IMR-90 (cell line): ENCODE measurements at regions of chr16 and their contacts with region 1.

Region 1: DNA sequence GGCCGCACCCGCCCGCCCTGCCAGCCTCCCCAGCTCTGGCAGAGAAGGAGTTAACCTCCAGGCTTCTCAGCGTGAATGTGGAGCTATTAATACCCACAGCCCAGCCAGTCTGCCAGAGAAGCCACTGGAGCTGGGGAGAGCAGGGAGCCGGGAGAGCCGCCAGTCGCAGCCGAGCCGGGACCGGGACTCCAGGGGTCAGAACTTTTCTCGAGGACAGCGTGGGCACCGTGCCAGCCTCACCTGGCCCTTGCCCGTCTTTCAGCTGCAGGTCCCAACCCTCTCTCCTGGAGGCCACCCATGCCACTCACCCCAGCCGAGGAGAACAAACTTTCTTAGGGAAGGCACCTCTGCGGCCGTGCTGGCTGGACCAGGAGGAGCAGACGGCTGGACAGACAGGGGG is 33.8 kb upstream of the SBK1 start:
- DNase-seq: peak; percentile 4
- ATAC-seq: peak; percentile 84
- H3K4me3 ChIP-seq: no peak overlapping the region
- H3K27ac ChIP-seq: no peak overlapping the region
- H3K4me1 ChIP-seq: no peaks in the 10 kb centered on the region
- H3K27me3 ChIP-seq: peaks cover 60% of the 10 kb centered on the region
- CTCF ChIP-seq: no peak
- POLR2A ChIP-seq: no peak
- RAD21 ChIP-seq: no peak

Region 2: GRCh38 chr16:27698266-27698665 is 560.3 kb before region 1 on chr16:
- CTCF ChIA-PET with region 1: no interaction called
- POLR2A ChIA-PET with region 1: no interaction called
- dilution Hi-C with region 1: no loop called
- in situ Hi-C with region 1: no loop called
- intact Hi-C with region 1: no loop called
- DNase-seq: no peak
- ATAC-seq: no peak
- H3K4me3 ChIP-seq: no peak overlapping the region
- H3K27ac ChIP-seq: no peak overlapping the region
- H3K4me1 ChIP-seq: peaks cover 2% of the 10 kb centered on the region; the same call in 1 of the 2 replicates
- H3K27me3 ChIP-seq: no peaks in the 10 kb centered on the region
- CTCF ChIP-seq: no peak
- POLR2A ChIP-seq: no peak
- RAD21 ChIP-seq: no peak

Region 3: DNA sequence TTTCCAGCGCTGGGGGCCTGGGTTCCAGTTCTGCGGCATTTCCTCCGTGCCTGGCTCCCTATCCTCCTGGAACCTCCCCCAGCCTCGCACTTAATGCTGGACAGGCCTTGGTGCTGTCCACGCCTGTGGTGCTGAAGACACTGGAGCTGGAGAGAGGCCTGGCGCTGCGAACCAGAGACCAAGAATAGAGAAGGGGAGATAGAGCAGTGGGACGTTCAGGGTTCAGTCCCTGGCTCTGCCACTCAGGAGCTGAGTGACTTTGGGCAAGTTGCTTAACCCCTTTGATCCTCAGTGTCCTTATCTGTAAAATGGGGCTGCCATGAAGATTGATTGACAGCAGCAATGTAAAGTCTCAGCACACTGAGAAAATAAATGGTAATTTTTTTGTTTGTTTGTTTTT is 45.6 kb after region 1 on chr16:
- CTCF ChIA-PET with region 1: no interaction called
- POLR2A ChIA-PET with region 1: no interaction called
- dilution Hi-C with region 1: no loop called
- in situ Hi-C with region 1: no loop called
- intact Hi-C with region 1: loop called (anchors 1 kb)
- DNase-seq: peak; percentile 40
- ATAC-seq: peak; percentile 90; the same call in 1 of the 2 replicates
- H3K4me3 ChIP-seq: no peak overlapping the region
- H3K27ac ChIP-seq: no peak overlapping the region
- H3K4me1 ChIP-seq: no peaks in the 10 kb centered on the region
- H3K27me3 ChIP-seq: peaks cover 7% of the 10 kb centered on the region
- CTCF ChIP-seq: no peak
- POLR2A ChIP-seq: no peak
- RAD21 ChIP-seq: no peak